IMR-90 (cell line): ENCODE measurements at regions of chr2 and their contacts with region 1.

Region 1: DNA sequence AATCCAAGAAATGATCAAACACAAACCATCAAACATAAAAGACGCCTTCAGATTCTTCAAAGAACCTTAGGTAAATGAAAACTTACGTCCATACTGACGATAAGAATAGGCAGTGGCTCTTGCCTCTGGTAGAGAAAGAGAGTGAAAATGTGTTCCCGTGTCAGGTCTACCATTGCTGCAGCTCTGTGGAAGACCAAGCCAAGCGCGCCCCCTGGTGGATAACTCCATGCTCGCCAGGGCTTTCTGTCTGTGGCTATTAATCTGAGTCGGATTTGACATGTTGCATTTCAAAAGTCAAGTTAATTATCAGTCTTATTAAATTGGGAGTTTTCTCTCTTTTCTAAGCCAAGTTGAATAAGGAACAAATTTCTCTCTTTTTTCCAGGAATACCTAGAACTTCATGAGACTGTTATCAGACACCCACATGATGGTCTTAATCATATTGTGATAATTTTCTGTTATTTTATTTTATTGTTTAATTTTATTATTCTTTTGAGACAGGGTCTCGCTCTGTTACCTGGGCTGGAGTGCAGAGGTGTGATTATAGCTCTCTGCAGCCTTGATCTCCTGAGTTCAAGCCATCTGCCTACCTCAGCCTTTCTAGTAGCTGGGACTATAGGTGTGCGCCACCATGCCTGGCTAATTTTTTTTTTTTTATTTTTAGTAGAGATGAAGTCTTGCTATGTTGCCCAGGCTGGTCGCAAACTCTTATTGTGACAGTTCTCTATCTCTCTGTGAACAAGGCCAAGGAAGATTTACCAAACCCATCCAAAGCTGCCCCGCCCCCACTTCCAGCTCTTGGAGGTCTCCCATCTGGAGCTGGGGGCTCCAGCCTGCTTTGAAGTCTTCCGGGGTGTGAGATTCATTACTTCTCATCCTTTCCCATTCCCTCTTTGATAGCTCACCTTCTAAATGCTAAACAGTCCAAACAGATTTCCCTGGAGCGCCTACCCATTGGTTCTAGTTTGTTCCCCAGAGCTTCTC is 15.8 kb upstream of the ZAP70 start:
- DNase-seq: peak; percentile 69
- ATAC-seq: peak; percentile 88
- H3K4me3 ChIP-seq: no peak overlapping the region; the same call in 1 of the 2 replicates
- H3K27ac ChIP-seq: no peak overlapping the region
- H3K4me1 ChIP-seq: no peaks in the 10 kb centered on the region
- H3K27me3 ChIP-seq: no peaks in the 10 kb centered on the region; the same call in none of the 2 replicates
- CTCF ChIP-seq: peak; percentile 99
- POLR2A ChIP-seq: peak; percentile 41; the same call in 1 of the 2 replicates
- RAD21 ChIP-seq: peak; percentile 99

Region 2: DNA sequence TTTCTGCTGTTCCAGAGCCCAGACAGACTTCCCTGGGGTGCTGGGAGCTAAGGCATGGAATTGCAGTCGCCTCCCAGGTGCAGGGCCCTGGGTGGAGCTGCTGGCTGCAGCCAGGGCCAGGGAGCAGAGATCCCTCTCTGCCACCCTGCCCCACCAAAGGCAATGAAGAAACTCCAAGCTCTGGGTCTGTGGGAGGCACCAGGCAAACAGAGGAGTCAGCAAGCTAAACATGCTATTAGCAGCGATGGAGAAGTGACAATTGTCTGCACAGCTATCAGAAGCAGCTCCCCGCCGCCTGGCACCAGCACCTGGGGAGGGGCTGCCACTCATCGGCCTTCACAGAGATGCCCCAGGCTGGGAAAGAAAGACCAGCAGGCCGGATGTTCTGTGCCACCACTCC is 79.6 kb before region 1 on chr2:
- CTCF ChIA-PET with region 1: no interaction called
- POLR2A ChIA-PET with region 1: no interaction called
- dilution Hi-C with region 1: no loop called
- in situ Hi-C with region 1: no loop called
- intact Hi-C with region 1: no loop called
- DNase-seq: no peak
- ATAC-seq: no peak
- H3K4me3 ChIP-seq: no peak overlapping the region
- H3K27ac ChIP-seq: no peak overlapping the region
- H3K4me1 ChIP-seq: no peaks in the 10 kb centered on the region
- H3K27me3 ChIP-seq: no peaks in the 10 kb centered on the region
- CTCF ChIP-seq: no peak
- POLR2A ChIP-seq: no peak
- RAD21 ChIP-seq: no peak

Region 3: DNA sequence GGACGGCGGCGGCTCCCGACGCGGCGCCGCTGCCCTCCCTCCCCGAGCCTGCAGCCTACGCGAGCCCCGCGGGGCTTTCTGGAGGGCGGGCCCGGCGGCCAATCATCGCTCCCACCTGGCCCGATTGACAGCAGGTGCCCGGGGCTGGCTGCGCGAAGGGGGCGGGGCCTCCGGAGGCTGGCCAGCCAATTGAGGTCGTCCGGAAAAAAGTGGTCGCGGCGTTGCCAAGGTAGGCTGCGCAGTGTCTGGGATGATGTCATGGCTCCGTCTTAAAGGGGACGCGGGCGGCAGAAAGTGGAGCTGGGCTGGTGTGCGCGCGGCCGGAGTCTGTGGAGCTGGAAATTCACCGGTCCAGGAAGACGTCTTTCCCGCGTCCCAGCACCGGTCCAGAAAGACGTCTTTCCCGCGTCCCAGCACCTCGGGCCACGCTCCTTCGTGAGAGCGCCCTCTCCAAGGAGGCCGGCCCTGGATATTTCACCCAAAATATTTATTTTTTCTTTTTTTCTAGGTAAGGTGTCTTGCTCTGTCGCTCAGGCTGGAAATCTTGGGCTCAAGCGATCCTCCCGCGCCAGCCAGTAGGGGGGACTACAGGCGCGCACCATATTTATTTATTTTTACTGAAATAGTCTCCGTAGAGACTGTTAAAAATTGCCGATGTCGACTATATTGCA is 33.4 kb before region 1 on chr2 and contains the start of gene ACTR1B:
- CTCF ChIA-PET with region 1: interaction called, 5 read pairs
- POLR2A ChIA-PET with region 1: no interaction called
- dilution Hi-C with region 1: no loop called
- in situ Hi-C with region 1: no loop called
- intact Hi-C with region 1: loop called (anchors 1 kb)
- DNase-seq: peak; percentile 98
- ATAC-seq: peak; percentile 89
- H3K4me3 ChIP-seq: peak within 1 kb of the TSS; percentile 57
- H3K27ac ChIP-seq: peak within 1 kb of the TSS; percentile 95
- H3K4me1 ChIP-seq: peaks cover 9% of the 10 kb centered on the region
- H3K27me3 ChIP-seq: no peaks in the 10 kb centered on the region
- CTCF ChIP-seq: peak; percentile 65
- POLR2A ChIP-seq: peak; percentile 53
- RAD21 ChIP-seq: peak; percentile 40
- total RNA-seq, gene ACTR1B: 34.2 and 40.5 TPM in 2 replicates

Region 4: DNA sequence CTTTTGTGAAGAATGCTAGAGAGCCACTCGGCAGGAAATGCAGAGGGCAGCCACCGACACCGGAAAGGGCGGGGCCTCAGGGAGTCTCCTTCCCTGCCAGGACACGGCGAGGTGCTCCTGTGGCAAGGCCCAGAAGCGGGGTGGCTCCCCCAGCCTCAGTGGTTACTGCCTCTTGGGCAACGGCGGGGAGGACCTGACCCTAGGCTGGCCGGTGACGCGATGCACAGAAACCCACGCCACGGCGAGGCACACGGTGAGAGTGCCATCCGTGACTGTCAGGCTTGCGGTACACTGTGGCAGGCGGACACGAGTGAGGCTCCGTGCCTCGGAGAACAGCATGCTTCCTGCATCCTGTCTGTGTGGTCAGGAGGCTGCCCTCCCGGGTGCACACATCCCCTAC is 63.6 kb after region 1 on chr2:
- CTCF ChIA-PET with region 1: no interaction called
- POLR2A ChIA-PET with region 1: no interaction called
- dilution Hi-C with region 1: no loop called
- in situ Hi-C with region 1: no loop called
- intact Hi-C with region 1: loop called (anchors 10 kb)
- DNase-seq: no peak
- ATAC-seq: no peak
- H3K4me3 ChIP-seq: no peak overlapping the region
- H3K27ac ChIP-seq: no peak overlapping the region
- H3K4me1 ChIP-seq: no peaks in the 10 kb centered on the region
- H3K27me3 ChIP-seq: no peaks in the 10 kb centered on the region
- CTCF ChIP-seq: no peak
- POLR2A ChIP-seq: no peak
- RAD21 ChIP-seq: no peak

Region 5: DNA sequence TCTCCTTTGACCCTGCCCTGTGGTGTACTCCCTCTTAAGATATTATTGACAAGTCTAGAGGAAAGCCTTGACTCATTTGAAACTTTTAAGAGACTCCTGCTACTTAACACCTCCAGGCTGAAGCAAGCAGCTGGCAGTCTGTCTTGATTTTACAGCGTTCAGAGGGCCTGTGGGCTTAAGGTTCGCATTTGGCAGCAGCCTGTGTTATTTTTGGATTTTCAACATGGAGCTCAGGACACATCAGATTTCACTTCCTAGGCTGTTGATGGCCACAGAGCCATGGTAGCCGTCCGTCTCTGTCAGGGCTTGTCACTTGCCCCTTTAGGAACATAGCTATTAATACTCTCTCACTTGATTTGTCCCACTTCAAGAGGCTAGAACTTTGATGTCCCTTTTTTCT is 463.0 kb after region 1 on chr2:
- CTCF ChIA-PET with region 1: no interaction called
- POLR2A ChIA-PET with region 1: no interaction called
- dilution Hi-C with region 1: no loop called
- in situ Hi-C with region 1: no loop called
- intact Hi-C with region 1: loop called (anchors 5 kb)
- DNase-seq: no peak
- ATAC-seq: no peak
- H3K4me3 ChIP-seq: no peak overlapping the region
- H3K27ac ChIP-seq: no peak overlapping the region
- H3K4me1 ChIP-seq: 0 out of 2 replicates have a peak, but pooled peaks cover 1% of the 10 kb centered on the region
- H3K27me3 ChIP-seq: peaks cover 19% of the 10 kb centered on the region
- CTCF ChIP-seq: no peak
- POLR2A ChIP-seq: no peak
- RAD21 ChIP-seq: no peak

Region 6: DNA sequence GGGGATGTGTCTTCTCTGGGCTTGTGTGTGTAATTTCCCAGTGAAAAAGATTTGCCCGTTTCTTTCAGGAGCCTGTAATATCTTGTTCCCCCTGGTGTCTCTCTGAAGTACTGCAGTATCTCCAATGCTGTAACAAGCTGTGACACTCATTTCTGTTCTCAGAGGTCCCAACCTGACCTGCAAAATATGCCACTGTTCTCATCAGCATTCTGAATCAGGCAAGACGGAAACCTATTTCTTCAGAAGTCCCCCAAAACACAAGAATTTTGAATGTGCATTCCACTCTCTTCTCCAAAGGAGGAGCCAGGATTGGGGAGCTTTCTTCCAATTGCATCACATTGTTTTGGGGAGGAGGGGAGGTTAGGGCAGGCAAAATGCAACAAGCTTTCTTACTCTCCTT is 571.7 kb after region 1 on chr2:
- CTCF ChIA-PET with region 1: interaction called, 3 read pairs
- POLR2A ChIA-PET with region 1: no interaction called
- dilution Hi-C with region 1: no loop called
- in situ Hi-C with region 1: no loop called
- intact Hi-C with region 1: loop called (anchors 1 kb)
- DNase-seq: peak; percentile 63
- ATAC-seq: peak; percentile 95
- H3K4me3 ChIP-seq: no peak overlapping the region
- H3K27ac ChIP-seq: no peak overlapping the region
- H3K4me1 ChIP-seq: no peaks in the 10 kb centered on the region
- H3K27me3 ChIP-seq: peaks cover 6% of the 10 kb centered on the region
- CTCF ChIP-seq: peak; percentile 67
- POLR2A ChIP-seq: no peak
- RAD21 ChIP-seq: peak; percentile 71

Region 7: GRCh38 chr2:98385050-98385699 is 687.6 kb after region 1 on chr2:
- CTCF ChIA-PET with region 1: interaction called, 22 read pairs
- POLR2A ChIA-PET with region 1: no interaction called
- dilution Hi-C with region 1: no loop called
- in situ Hi-C with region 1: loop called (anchors 10 kb)
- intact Hi-C with region 1: loop called (anchors 1 kb)
- DNase-seq: peak; percentile 71
- ATAC-seq: peak; percentile 99
- H3K4me3 ChIP-seq: no peak overlapping the region
- H3K27ac ChIP-seq: no peak overlapping the region
- H3K4me1 ChIP-seq: no peaks in the 10 kb centered on the region
- H3K27me3 ChIP-seq: peaks cover 31% of the 10 kb centered on the region
- CTCF ChIP-seq: peak; percentile 99
- POLR2A ChIP-seq: no peak
- RAD21 ChIP-seq: peak; percentile 99

Region 8: GRCh38 chr2:98835831-98836385 is 1138.4 kb after region 1 on chr2:
- CTCF ChIA-PET with region 1: no interaction called
- POLR2A ChIA-PET with region 1: no interaction called
- dilution Hi-C with region 1: no loop called
- in situ Hi-C with region 1: no loop called
- intact Hi-C with region 1: loop called (anchors 10 kb)
- DNase-seq: no peak
- ATAC-seq: no peak
- H3K4me3 ChIP-seq: no peak overlapping the region
- H3K27ac ChIP-seq: no peak overlapping the region
- H3K4me1 ChIP-seq: no peaks in the 10 kb centered on the region
- H3K27me3 ChIP-seq: peaks cover 16% of the 10 kb centered on the region
- CTCF ChIP-seq: no peak
- POLR2A ChIP-seq: no peak
- RAD21 ChIP-seq: no peak